AG04450 (cell line): ENCODE measurements at regions of chr11 and their contacts with region 1.

Region 1: GRCh38 chr11:117143871-117144476 is at the start of gene PAFAH1B2:
- DNase-seq: peak; percentile 60
- H3K4me3 ChIP-seq: peak within 1 kb of the TSS; percentile 95
- H3K27ac ChIP-seq: peak within 1 kb of the TSS; percentile 82
- H3K27me3 ChIP-seq: no peaks in the 10 kb centered on the region
- CTCF ChIP-seq: no peak
- polyA plus RNA-seq, gene PAFAH1B2: 46.1 and 48.8 TPM in 2 replicates

Region 2: GRCh38 chr11:116732271-116733042 is 411.5 kb before region 1 on chr11:
- CTCF ChIA-PET with region 1: interaction called, 11 read pairs
- POLR2A ChIA-PET with region 1: no interaction called
- DNase-seq: peak; percentile 26
- H3K4me3 ChIP-seq: no peak overlapping the region
- H3K27ac ChIP-seq: no peak overlapping the region
- H3K27me3 ChIP-seq: peaks cover 41% of the 10 kb centered on the region
- CTCF ChIP-seq: peak; percentile 89

Region 3: DNA sequence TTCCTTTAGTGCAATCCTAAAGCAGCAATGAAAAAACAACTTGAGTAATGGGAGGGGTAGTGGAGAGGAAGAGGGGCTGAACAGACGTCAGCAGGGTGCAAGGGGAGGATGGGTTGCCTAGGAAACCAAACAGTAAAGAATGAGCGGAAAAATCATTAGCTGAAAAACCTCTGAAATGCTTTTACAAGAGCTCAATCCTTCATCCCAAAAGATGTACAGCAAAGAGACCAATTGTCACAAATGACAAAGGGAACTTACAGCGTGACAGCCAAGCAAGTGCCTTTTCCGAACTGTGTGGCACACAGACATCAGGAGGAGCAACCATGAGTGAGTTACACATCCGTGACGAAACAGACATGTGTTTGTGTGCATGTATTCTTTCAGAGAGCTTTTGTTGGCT is 150.4 kb before region 1 on chr11:
- CTCF ChIA-PET with region 1: no interaction called
- POLR2A ChIA-PET with region 1: no interaction called
- DNase-seq: no peak
- H3K4me3 ChIP-seq: no peak overlapping the region
- H3K27ac ChIP-seq: no peak overlapping the region
- H3K27me3 ChIP-seq: no peaks in the 10 kb centered on the region
- CTCF ChIP-seq: no peak

Region 4: DNA sequence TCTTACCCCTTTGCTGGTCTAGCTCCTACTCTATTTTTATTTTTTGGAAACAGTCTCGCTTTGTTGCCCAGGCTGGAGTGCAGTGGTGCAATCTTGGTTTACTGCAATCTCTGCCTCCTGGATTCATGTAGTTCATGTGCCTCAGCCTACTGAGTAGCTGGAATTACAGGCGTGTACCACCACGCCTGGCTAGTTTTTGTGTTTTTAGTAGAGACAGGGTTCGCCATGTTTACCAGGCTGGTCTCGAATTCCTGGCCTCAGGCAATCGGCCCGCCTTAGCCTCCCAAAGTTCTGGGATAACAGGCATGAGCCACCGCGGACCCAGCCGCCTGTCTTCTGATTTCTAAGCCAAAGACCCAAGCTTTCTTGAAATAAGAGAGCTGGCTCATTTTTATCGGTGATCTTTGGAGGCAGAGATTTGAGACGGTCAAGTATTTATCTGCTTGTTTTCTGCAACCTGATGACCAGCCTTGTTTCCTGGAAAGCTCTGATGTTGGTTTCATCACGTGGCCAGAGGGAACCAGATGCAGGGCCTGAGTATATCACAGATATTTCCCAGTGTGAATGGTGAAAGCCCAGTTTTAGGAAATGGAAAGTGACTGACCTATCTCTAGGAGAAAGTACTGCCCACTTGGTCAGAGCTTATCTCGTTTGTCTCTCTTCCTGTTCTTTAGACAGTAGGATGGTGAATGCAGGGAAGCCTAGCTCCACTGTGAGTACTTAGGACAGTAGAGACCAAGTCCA is 28.9 kb after region 1 on chr11:
- CTCF ChIA-PET with region 1: interaction called, 4 read pairs
- POLR2A ChIA-PET with region 1: interaction called, 10 read pairs
- DNase-seq: no peak
- H3K4me3 ChIP-seq: no peak overlapping the region
- H3K27ac ChIP-seq: no peak overlapping the region
- H3K27me3 ChIP-seq: no peaks in the 10 kb centered on the region
- CTCF ChIP-seq: no peak